Prostate gland (tissue), 2 donors: ENCODE measurements at regions of chr4 and their contacts with region 1.

Region 1: DNA sequence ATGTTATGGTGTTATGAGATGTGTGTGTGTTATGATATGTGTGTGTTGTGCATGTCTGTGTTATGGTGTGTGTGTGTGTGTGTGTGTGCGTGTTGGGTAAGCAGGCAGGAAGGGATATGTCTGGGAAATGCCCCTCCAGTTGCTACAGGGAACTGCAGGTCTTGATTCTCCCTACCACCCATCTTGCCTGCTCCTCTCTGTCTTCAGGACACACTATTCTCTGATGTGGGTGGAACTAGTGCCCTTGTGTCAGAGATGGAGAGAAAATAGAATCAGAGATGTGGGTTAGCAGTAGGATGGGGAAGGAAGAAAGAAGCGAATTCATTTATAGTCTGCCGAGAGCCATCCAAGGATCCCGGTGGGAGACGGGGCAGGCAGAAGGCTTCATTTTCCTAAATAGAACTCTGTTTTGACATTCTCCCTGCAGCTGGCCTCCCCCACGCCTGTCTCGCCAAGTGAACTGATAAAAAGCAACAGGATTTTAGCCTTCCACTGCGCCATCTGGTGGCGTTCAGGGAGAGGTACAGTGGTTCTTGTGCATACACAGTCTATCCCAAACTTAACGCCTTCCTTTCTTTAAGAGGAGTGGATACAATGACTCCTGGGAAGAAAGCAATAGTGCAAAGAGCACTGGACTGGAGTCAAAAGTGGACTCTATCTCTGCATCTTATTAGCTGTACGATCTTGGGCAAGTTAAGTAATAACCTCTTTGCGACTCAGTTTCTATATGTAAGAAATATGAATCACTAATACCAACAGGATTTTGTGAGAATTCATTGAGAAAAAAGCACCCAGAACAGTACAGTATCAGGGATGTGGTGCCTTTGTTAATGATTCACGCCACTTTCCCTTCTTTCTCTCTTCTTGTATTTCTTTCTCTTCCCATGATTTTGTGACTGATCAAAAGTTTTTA is 14.1 kb upstream of the MGST2 start:
- DNase-seq: peak; percentile 72
- H3K4me3 ChIP-seq: no peak overlapping the region
- H3K27ac ChIP-seq: no peak overlapping the region
- H3K4me1 ChIP-seq: no peaks in the 10 kb centered on the region
- H3K27me3 ChIP-seq: no peaks in the 10 kb centered on the region
- CTCF ChIP-seq: peak; percentile 55 to 88 (median 80)
- POLR2A ChIP-seq: no peak

Region 2: DNA sequence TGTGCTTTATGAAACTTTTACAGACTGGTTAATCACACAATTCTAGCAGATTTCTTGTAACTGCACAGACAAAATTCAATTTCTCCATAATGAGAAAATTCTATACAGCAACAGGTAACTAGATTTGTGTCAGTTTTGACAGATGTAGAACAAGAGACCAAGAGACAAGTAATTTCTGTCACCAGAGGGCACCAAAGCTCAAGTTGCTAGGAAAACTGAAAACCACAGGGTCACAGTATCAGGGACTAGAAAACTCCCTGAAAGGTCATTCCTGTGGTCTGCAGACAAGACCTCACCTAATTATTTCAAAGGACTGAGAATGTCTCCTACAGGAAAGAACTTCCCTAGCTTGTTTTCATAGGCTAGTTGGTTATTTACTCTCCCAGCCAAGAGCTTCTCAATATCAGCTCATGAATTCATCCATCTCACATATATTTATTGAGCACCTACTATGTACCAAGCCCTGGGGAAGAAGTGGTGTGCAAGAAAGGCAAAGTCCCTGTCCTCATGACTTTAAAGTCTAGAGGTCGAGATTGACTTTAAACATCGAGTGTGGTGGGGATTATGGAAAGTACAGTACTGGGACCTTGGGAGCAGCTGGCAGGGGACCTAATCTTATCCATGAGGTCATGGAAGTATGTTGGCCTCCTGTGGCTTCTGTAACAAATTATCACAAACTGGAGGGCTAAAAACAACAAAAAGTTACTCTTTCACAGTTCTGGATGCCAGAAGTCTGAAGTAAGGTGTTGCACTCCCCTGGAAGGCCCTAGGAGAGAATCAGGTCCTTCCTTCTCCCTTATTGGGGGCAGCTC is 47.8 kb before region 1 on chr4:
- intact Hi-C with region 1: loop called (anchors 5 kb)
- DNase-seq: peak; percentile 43
- H3K4me3 ChIP-seq: no peak overlapping the region
- H3K27ac ChIP-seq: no peak overlapping the region
- H3K4me1 ChIP-seq: no peaks in the 10 kb centered on the region
- H3K27me3 ChIP-seq: no peaks in the 10 kb centered on the region
- CTCF ChIP-seq: peak; percentile 21 to 63 (median 60)
- POLR2A ChIP-seq: no peak

Region 3: GRCh38 chr4:140326395-140326993 is 675.0 kb after region 1 on chr4:
- intact Hi-C with region 1: loop called (anchors 10 kb)
- DNase-seq: no peak
- H3K4me3 ChIP-seq: no peak overlapping the region
- H3K27ac ChIP-seq: no peak overlapping the region
- H3K4me1 ChIP-seq: no peaks in the 10 kb centered on the region
- H3K27me3 ChIP-seq: no peaks in the 10 kb centered on the region
- CTCF ChIP-seq: peak; percentile 24 to 78 (median 60)
- POLR2A ChIP-seq: no peak